Dorsolateral prefrontal cortex (tissue), 120 donors: ENCODE measurements at regions of chr2 and their contacts with region 1.

Region 1: DNA sequence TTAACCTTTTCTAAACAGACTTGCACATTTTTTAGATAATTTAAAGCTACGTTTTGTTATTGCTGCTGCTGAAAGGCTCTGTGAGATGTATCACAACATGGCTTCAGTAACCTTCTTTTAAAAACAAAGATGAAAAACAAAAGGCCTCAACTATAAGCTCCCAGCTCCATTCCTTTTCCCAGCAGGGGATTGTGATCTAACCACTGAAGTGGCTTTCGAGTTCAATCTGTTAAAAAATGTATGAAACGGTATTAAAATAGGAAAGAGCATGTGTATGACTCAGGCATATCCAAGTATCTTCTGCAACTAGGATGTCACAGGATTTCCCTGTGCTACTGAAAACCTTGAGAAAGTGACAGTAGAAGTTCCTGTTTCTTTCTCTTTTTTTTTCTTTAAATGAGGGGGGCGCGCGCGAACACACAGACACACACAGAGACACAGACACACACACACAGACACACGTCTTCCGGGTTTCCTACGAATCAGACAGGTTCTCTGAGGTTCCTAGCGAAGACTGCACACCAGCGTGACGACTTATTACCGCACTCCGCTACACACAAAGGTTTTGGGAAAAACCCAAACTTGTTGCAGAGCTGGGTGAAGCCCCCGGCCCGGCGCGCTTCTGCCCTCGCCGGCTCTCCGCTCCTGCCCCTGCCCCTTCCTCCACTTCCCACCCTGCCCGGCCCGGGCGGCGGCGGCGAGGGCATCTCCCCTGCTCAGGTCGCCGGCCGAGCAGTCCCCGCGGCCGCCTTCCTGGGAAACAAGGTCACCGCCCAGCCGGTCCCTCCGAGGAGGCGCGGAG is 86.8 kb downstream of the RBMS1 start:
- DNase-seq: peak in 7 of 10 donors; percentile 7 to 69 (median 46)
- H3K4me3 ChIP-seq: peak overlapping the region; percentile 54 to 89 (median 78)
- H3K27ac ChIP-seq: peak overlapping the region in 57 of 59 donors; percentile 12 to 96 (median 82)
- H3K27me3 ChIP-seq: peaks cover 0 to 4% (median 0%) of the 10 kb centered on the region in 45 donors
- CTCF ChIP-seq: peak in 2 of 56 donors; percentile 7 to 24

Region 2: DNA sequence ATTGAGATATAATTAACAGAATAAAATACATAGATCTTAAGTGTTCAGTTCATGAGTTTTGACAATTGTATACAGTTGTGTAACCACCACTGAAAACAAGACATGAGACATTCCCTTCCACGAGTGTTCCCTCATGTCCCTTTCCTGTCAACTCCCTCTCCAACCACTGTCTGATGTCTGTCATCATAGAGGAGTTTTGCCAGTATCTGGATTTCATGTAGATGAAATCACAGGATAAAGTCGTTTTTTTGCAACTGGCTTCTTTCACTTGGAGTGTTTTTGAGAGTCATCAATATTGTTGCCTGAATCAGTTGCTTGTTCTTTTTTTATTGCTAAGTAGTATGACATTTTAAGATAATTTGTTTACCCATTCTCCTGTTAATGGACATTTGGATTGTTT is 34.1 kb after region 1 on chr2:
- intact Hi-C with region 1: no loop called
- DNase-seq: no peak
- H3K4me3 ChIP-seq: no peak overlapping the region
- H3K27ac ChIP-seq: no peak overlapping the region
- H3K27me3 ChIP-seq: no peaks in the 10 kb centered on the region
- CTCF ChIP-seq: no peak

Region 3: GRCh38 chr2:160493227-160494028 is 86.6 kb after region 1 on chr2 and contains the start of gene RBMS1:
- intact Hi-C with region 1: loop called in 1 of 2 experiments (anchors 5 kb)
- DNase-seq: peak in 3 of 10 donors; percentile 27 to 47 (median 47)
- H3K4me3 ChIP-seq: peak within 1 kb of the TSS; percentile 50 to 86 (median 75)
- H3K27ac ChIP-seq: peak within 1 kb of the TSS in 58 of 59 donors; percentile 11 to 93 (median 82)
- H3K27me3 ChIP-seq: peaks cover 0 to 15% (median 0%) of the 10 kb centered on the region in 45 donors
- CTCF ChIP-seq: no peak
- total RNA-seq, gene RBMS1: 12.5 to 38.5 (median 24.7) TPM

Region 4: GRCh38 chr2:160516547-160517365 is 110.0 kb after region 1 on chr2:
- intact Hi-C with region 1: no loop called
- DNase-seq: no peak
- H3K4me3 ChIP-seq: no peak overlapping the region
- H3K27ac ChIP-seq: no peak overlapping the region
- H3K27me3 ChIP-seq: no peaks in the 10 kb centered on the region
- CTCF ChIP-seq: no peak